Activated CD4-positive, alpha-beta memory T cell treated with anti-CD3 and anti-CD28 coated beads for 36 hours (primary cell): ENCODE measurements at regions of chr4 and their contacts with region 1.

Region 1: GRCh38 chr4:80007745-80008149 is 65.3 kb downstream of the ANTXR2 start:
- DNase-seq: no peak
- H3K4me3 Mint-ChIP-seq: peak overlapping the region; percentile 20
- H3K27ac Mint-ChIP-seq: peak overlapping the region; percentile 87
- H3K4me1 Mint-ChIP-seq: peaks cover 64% of the 10 kb centered on the region
- H3K27me3 Mint-ChIP-seq: no peaks in the 10 kb centered on the region

Region 2: DNA sequence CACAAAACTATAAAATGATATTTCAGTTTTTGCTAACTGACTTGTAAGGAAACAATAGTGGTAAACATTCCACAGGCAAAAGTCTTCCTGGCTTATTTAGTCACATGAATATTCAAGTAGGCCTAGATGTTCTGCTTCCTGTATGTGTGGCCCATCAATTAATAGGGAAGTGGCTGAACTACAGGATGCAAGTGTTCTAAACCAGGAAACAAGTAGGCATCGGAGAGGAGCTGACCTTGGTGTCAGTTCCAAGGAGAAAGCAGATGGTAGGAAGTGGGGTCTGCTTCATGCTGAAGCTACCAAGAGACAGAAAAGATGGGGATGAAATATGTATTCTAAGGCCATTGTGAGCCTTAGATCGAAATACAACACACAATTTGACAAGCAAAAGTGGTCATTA is 84.5 kb before region 1 on chr4:
- CTCF ChIA-PET with region 1: no interaction called
- POLR2A ChIA-PET with region 1: no interaction called
- intact Hi-C with region 1: loop called (anchors 2 kb)
- DNase-seq: no peak
- H3K4me3 Mint-ChIP-seq: no peak overlapping the region
- H3K27ac Mint-ChIP-seq: no peak overlapping the region
- H3K4me1 Mint-ChIP-seq: peaks cover 11% of the 10 kb centered on the region
- H3K27me3 Mint-ChIP-seq: no peaks in the 10 kb centered on the region

Region 3: GRCh38 chr4:79993476-79993875 is 14.3 kb before region 1 on chr4:
- CTCF ChIA-PET with region 1: no interaction called
- POLR2A ChIA-PET with region 1: no interaction called
- intact Hi-C with region 1: loop called (anchors 2 kb)
- DNase-seq: no peak
- H3K4me3 Mint-ChIP-seq: no peak overlapping the region
- H3K27ac Mint-ChIP-seq: no peak overlapping the region
- H3K4me1 Mint-ChIP-seq: peaks cover 64% of the 10 kb centered on the region
- H3K27me3 Mint-ChIP-seq: no peaks in the 10 kb centered on the region

Region 4: DNA sequence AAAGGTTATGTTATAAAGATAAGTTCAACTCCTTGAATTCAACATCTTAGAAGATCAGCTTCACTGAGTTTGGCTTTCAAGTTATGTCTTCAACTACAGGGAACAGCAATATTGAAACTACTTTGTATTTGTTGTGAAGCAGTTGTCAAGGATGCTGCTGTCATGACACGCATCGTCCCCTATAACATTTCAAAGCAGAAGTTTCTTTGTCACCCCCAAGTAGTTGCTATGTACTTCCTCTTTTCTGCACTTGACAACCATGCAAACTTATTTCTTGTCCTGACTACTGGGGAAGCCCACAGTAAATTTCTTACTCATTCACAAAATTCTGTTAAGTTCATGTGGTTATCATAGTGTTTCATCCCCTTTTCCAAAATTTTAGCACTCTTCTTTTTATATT is 51.0 kb after region 1 on chr4:
- CTCF ChIA-PET with region 1: no interaction called
- POLR2A ChIA-PET with region 1: no interaction called
- intact Hi-C with region 1: loop called (anchors 1 kb)
- DNase-seq: peak; percentile 66
- H3K4me3 Mint-ChIP-seq: peak overlapping the region; percentile 72
- H3K27ac Mint-ChIP-seq: peak overlapping the region; percentile 91
- H3K4me1 Mint-ChIP-seq: peaks cover 70% of the 10 kb centered on the region
- H3K27me3 Mint-ChIP-seq: no peaks in the 10 kb centered on the region

Region 5: DNA sequence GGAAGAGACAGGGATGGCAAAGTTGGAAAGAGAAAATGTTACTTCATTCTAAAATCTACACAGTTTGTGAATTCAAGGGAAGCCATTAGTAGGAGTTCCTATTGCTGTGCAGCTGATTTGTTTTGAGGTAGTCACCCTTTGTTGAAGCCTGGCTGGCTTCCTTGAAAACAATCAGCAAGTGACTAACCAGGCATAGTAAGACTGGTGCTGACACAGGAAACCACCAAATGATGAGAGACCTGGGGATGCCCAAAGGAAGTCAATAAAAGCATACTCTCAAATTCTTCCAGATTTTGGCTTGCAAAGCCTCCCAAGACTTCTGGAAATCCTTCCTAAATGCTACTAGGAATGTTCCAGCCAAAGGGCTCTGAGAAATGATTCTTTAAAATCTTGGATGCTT is 165.7 kb after region 1 on chr4:
- CTCF ChIA-PET with region 1: no interaction called
- POLR2A ChIA-PET with region 1: interaction called, 3 read pairs
- intact Hi-C with region 1: loop called (anchors 1 kb)
- DNase-seq: peak; percentile 71
- H3K4me3 Mint-ChIP-seq: peak overlapping the region; percentile 18
- H3K27ac Mint-ChIP-seq: peak overlapping the region; percentile 81
- H3K4me1 Mint-ChIP-seq: peaks cover 55% of the 10 kb centered on the region
- H3K27me3 Mint-ChIP-seq: no peaks in the 10 kb centered on the region

Region 6: GRCh38 chr4:80202190-80202711 is 194.5 kb after region 1 on chr4:
- CTCF ChIA-PET with region 1: interaction called, 5 read pairs
- POLR2A ChIA-PET with region 1: no interaction called
- intact Hi-C with region 1: loop called (anchors 5 kb)
- DNase-seq: peak; percentile 86
- H3K4me3 Mint-ChIP-seq: peak overlapping the region; percentile 73
- H3K27ac Mint-ChIP-seq: peak overlapping the region; percentile 78
- H3K4me1 Mint-ChIP-seq: peaks cover 22% of the 10 kb centered on the region
- H3K27me3 Mint-ChIP-seq: peaks cover 6% of the 10 kb centered on the region

Region 7: GRCh38 chr4:80393246-80393969 is 385.7 kb after region 1 on chr4:
- CTCF ChIA-PET with region 1: no interaction called
- POLR2A ChIA-PET with region 1: no interaction called
- intact Hi-C with region 1: loop called (anchors 5 kb)
- DNase-seq: peak; percentile 29
- H3K4me3 Mint-ChIP-seq: no peak overlapping the region
- H3K27ac Mint-ChIP-seq: no peak overlapping the region
- H3K4me1 Mint-ChIP-seq: peaks cover 8% of the 10 kb centered on the region
- H3K27me3 Mint-ChIP-seq: no peaks in the 10 kb centered on the region